ENCODE measurements at regions of chr2 and their contacts with region 1.

Region 1: DNA sequence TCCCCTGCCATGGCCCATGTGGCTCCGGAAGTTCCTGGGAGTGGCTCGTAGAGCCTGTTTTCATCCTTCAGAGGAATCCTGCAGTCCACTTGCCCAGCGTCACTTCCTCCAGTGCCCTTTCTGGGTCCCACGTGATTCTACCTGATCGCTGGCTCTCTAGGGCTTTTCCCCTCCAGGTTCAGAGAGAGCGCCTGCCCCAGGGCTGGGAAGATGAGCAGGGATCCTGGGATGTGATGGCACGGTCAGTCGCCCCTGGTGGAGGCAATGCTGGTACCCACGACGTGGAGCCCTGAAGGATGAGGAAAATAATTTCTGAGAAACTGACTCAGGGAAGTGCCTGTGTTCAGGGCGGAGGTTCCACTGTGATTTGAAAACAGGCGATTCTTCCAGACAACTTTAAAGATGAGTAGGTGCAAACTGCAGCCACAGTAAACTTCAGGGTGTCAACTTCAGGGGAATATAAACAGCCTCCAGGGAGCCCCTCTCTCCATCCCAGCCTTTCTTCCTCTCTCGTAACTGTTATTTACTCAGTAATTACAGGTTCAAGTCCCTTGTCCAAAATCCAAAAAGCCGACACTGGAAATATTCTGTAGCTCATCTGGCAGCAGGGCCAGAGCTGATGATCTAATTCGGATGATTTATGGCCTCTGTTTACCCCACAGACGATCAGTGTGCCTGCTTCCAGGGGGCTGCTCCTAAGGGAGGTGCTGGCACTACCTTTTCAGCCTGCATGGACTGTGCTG is 105.9 kb downstream of the AGAP1 start:
- DNase-seq: no peak
- H3K4me3 ChIP-seq: no peak overlapping the region
- H3K27ac ChIP-seq: no peak overlapping the region
- H3K4me1 ChIP-seq: no peaks in the 10 kb centered on the region
- H3K27me3 ChIP-seq: no peaks in the 10 kb centered on the region
- CTCF ChIP-seq: no peak
- POLR2A ChIP-seq: no peak

Region 2: GRCh38 chr2:235746257-235747084 is 146.7 kb after region 1 on chr2:
- intact Hi-C with region 1: loop called (anchors 2 kb)
- DNase-seq: peak; percentile 57 to 66
- H3K4me3 ChIP-seq: no peak overlapping the region
- H3K27ac ChIP-seq: no peak overlapping the region
- H3K4me1 ChIP-seq: no peaks in the 10 kb centered on the region
- H3K27me3 ChIP-seq: no peaks in the 10 kb centered on the region
- CTCF ChIP-seq: peak; percentile 44 to 85 (median 78)
- POLR2A ChIP-seq: no peak